ENCODE measurements at regions of chr7 and their contacts with region 1.

Region 1: DNA sequence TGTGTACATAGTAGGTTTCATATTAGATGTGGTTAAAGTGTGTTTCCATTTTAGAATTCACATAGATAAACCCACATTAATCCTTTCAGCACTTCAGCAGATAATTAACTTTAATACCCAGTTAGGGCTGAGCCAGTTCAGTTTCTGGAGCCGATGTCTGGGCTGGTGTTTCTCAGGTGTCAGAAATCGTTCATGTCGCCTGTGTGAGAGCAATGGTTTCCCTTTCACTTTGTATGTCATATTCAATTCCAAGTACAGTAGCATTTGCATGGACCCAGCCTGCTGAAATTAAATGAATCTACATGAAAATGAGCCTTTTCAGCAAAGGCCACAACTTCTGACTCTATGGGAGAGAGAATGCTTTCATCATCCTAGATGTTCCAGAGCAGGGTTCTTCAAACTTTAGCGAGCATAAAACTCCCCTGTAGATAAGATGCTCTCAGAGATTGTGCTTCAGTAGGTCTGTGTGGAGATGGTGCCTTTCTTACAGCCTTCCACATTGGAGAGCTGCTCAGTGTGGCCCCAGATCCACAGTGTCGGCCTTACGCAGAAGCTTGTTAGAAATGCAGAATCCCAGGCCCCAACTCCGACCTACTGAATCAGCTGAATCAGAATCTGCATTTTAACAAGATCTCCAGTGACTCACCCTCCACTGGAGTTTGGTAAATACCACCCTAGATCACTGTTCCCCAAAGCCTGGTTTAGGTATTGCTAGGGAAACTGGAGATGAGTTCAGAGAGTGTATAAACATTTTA is 19.6 kb downstream of the WIPF3 start:
- DNase-seq: no peak
- H3K4me3 ChIP-seq: no peak overlapping the region
- H3K27ac ChIP-seq: no peak overlapping the region
- H3K4me1 ChIP-seq: peaks cover 7% of the 10 kb centered on the region
- H3K27me3 ChIP-seq: no peaks in the 10 kb centered on the region
- CTCF ChIP-seq: no peak
- EP300 ChIP-seq: no peak
- POLR2A ChIP-seq: no peak

Region 2: DNA sequence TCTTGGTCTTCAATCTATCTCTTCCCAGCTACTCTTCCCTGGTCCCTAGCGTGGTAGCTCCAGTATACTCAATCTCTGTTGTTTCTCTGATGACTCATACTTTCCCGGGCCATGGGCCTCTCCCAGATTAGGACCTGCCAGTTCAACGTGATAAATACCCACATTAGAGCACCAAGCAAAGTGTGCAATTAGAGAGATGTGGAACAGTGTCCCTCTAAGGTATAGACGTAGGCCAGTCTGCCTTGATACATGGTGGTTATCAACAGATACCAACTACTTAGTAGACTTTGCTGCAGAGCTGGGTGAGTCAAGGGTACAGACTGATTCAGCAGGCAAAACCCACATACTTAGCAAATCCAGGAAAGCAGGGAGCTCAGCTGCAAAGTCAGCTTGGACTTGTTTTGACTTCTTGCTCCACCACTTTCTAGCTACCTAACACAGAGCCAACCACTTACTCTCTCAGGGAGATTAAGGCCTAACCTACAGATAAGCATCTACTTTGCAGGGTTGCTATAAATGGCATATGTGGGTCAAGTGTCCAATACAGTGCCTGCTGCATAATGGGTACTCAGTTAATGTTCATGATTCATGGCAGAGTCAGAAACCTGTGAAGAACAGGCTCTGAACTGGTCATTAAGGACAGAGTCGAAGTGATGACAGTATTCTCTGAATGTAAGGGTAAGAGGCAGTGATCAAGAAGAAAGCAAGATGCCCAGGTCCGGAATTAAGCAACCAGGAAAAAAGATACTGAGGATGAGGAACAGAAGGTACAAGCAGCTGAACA is 455.2 kb before region 1 on chr7:
- intact Hi-C with region 1: no loop called
- DNase-seq: peak in 1 of 5 donors; percentile 24
- H3K4me3 ChIP-seq: no peak overlapping the region
- H3K27ac ChIP-seq: no peak overlapping the region
- H3K4me1 ChIP-seq: no peaks in the 10 kb centered on the region
- H3K27me3 ChIP-seq: no peaks in the 10 kb centered on the region
- CTCF ChIP-seq: no peak
- EP300 ChIP-seq: no peak
- POLR2A ChIP-seq: no peak

Region 3: GRCh38 chr7:29894256-29894655 is 68.3 kb after region 1 on chr7:
- intact Hi-C with region 1: loop called in 1 of 4 experiments (anchors 10 kb)
- DNase-seq: no peak
- H3K4me3 ChIP-seq: no peak overlapping the region
- H3K27ac ChIP-seq: no peak overlapping the region
- H3K4me1 ChIP-seq: peaks cover 2% of the 10 kb centered on the region
- H3K27me3 ChIP-seq: no peaks in the 10 kb centered on the region
- CTCF ChIP-seq: no peak
- EP300 ChIP-seq: no peak
- POLR2A ChIP-seq: no peak

Region 4: DNA sequence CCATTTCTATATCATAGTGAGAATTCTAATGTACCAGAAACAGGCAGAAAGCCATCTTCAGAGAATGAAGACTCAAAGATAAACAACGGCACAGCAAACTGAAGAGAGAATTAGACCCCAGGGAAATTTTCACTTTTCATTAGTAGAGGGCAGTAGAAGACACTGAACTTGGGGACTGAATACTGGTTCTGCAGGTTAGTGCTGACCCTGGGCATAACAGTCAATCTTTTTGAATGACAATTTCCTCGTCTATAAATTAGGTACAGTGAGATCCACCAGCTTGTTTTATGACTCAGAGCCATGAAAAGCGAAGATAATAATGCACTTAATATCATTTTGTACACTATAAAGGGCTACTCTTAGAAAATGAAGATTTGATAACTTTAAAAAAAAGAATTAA is 186.8 kb after region 1 on chr7:
- intact Hi-C with region 1: no loop called
- DNase-seq: no peak
- H3K4me3 ChIP-seq: no peak overlapping the region
- H3K27ac ChIP-seq: no peak overlapping the region
- H3K4me1 ChIP-seq: no peaks in the 10 kb centered on the region
- H3K27me3 ChIP-seq: no peaks in the 10 kb centered on the region
- CTCF ChIP-seq: no peak
- EP300 ChIP-seq: no peak
- POLR2A ChIP-seq: no peak

Measured in ovary (tissue), 10 donors.